Dendritic cell treated with granulocyte-macrophage colony-stimulating factor and Interleukin-4, amounts not matched to agents 40 ng/mL and 50 ng/mL, for 4 days (primary cell): ENCODE measurements at regions of chr13 and their contacts with region 1.

Region 1: GRCh38 chr13:51286135-51287002 is 53.1 kb upstream of the SERPINE3 start:
- H3K4me3 Mint-ChIP-seq: no peak overlapping the region
- H3K27ac Mint-ChIP-seq: no peak overlapping the region
- H3K4me1 Mint-ChIP-seq: no peaks in the 10 kb centered on the region
- H3K27me3 Mint-ChIP-seq: no peaks in the 10 kb centered on the region

Region 2: DNA sequence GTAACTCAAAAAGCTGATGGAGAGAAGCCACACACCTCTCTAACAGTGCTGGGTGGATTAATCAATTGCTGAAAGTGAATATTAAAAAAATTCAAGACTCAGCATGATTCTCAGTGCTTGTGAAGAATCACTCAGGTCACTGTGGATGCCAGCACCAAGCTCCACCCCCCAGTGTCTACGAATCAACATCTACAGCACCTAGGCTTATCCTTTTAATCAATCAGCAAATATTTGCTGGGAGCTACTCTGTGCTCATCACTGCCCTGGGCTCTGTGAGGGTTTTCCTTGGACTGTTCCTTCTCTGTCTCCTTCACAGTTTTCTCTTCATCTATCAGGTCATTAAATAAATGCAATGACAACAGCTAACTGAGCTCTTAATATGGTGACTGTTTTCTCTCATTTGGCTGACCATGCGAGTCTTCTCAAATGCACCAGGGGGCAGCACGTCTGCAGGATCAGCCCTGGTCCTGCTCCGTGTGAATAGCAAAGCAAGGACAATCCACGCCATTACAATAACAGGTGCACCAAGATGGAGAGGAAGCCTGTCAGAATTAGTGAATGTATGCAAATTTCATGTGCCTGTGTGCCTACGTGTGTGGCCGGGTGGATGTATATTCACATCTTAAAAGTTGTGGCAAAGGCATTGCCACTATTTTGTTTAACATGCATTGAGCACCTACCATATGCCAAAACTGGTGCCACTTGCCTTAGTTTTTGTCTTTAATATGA is 160.7 kb before region 1 on chr13:
- intact Hi-C with region 1: loop called (anchors 1 kb)
- H3K4me3 Mint-ChIP-seq: no peak overlapping the region
- H3K27ac Mint-ChIP-seq: no peak overlapping the region
- H3K4me1 Mint-ChIP-seq: no peaks in the 10 kb centered on the region
- H3K27me3 Mint-ChIP-seq: peaks cover 8% of the 10 kb centered on the region

Region 3: DNA sequence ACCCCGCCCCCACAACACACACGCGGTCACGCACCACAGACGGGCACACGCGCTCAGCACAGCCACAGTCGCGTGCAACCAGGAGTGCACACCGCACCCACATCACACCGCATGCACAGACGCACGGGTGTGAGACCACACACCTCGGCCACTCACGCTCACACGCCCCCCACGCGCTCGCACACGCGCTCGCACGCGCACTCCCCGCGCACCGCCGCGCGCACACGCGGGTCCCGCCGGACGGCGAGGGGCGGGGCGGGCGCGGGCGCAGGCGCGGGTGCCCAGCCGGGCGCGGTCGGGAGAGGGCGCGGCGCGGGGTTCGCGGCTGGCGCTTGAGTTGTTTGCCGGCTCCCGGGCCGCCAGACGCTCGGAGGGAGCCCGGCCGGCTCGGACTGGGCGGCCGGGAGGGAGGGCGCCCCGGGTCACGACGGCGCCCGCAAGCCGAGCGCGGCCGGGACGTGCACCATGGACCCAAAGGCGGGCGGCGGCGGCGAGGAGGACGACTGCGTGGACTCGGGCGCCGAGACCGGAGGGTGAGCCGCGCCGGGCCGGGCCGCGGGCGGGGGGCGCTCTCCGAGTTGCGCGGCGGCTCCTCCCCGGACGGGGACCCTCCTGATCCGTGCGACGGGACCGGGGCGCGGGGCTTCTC is 64.2 kb before region 1 on chr13 and contains the start of gene FAM124A:
- intact Hi-C with region 1: loop called (anchors 2 kb)
- H3K4me3 Mint-ChIP-seq: peak within 1 kb of the TSS; percentile 73
- H3K27ac Mint-ChIP-seq: no peak within 1 kb of the TSS
- H3K4me1 Mint-ChIP-seq: peaks cover 14% of the 10 kb centered on the region
- H3K27me3 Mint-ChIP-seq: peaks cover 31% of the 10 kb centered on the region